ENCODE measurements at regions of chr4 and their contacts with region 1.

Region 1: GRCh38 chr4:153318696-153319320 is 25.7 kb upstream of the MND1 start:
- DNase-seq: peak; percentile 68
- H3K4me3 ChIP-seq: no peak overlapping the region
- H3K27ac ChIP-seq: no peak overlapping the region
- H3K4me1 ChIP-seq: peaks cover 11% of the 10 kb centered on the region
- CTCF ChIP-seq: peak; percentile 96

Region 2: GRCh38 chr4:152559641-152560040 is 759.2 kb before region 1 on chr4:
- CTCF ChIA-PET with region 1: no interaction called
- POLR2A ChIA-PET with region 1: no interaction called
- intact Hi-C with region 1: no loop called
- DNase-seq: no peak
- H3K4me3 ChIP-seq: no peak overlapping the region
- H3K27ac ChIP-seq: no peak overlapping the region
- H3K4me1 ChIP-seq: peaks cover 31% of the 10 kb centered on the region
- CTCF ChIP-seq: no peak

Region 3: DNA sequence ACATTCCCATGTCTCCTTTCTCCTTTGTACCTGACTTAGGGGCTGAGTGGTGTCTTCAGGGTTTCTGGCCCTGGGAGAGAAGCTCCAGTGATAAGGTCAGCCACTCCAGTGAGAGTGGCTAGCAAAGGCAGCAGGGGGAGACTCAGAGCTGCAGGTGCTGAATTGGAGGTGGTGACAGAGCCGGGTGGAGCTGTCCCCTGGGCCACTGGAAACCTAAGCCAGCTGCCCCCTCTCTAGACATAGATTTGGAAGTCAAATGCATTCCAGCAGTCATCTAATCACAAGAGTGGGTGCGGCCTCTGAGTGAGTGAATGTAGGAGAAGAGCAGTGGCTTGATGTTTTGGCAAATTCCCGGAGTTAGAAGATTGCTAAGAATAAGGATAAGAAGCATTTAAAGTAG is 86.0 kb before region 1 on chr4:
- CTCF ChIA-PET with region 1: no interaction called
- POLR2A ChIA-PET with region 1: no interaction called
- intact Hi-C with region 1: loop called (anchors 5 kb)
- DNase-seq: peak; percentile 30
- H3K4me3 ChIP-seq: no peak overlapping the region
- H3K27ac ChIP-seq: no peak overlapping the region
- H3K4me1 ChIP-seq: no peaks in the 10 kb centered on the region
- CTCF ChIP-seq: peak; percentile 54